B cell (primary cell): ENCODE measurements at regions of chr20 and their contacts with region 1.

Region 1: GRCh38 chr20:19706463-19706862 is 51.6 kb upstream of the RIN2 start:
- DNase-seq: peak; percentile 84
- ATAC-seq: peak; percentile 93
- H3K4me3 ChIP-seq: peak overlapping the region in 1 of 5 experiments; percentile 18
- H3K4me3 Mint-ChIP-seq: no peak overlapping the region
- H3K27ac ChIP-seq: peak overlapping the region; percentile 61 to 65
- H3K27ac Mint-ChIP-seq: no peak overlapping the region
- H3K4me1 ChIP-seq: peaks cover 49 to 53% of the 10 kb centered on the region in 2 donors
- H3K4me1 Mint-ChIP-seq: peaks cover 30% of the 10 kb centered on the region
- H3K27me3 ChIP-seq: no peaks in the 10 kb centered on the region
- H3K27me3 Mint-ChIP-seq: no peaks in the 10 kb centered on the region
- CTCF ChIP-seq: no peak

Region 2: GRCh38 chr20:19727251-19727847 is 20.9 kb after region 1 on chr20:
- CTCF ChIA-PET with region 1: no interaction called
- POLR2A ChIA-PET with region 1: no interaction called
- intact Hi-C with region 1: loop called (anchors 1 kb)
- DNase-seq: no peak
- ATAC-seq: no peak
- H3K4me3 ChIP-seq: no peak overlapping the region
- H3K4me3 Mint-ChIP-seq: no peak overlapping the region
- H3K27ac ChIP-seq: no peak overlapping the region
- H3K27ac Mint-ChIP-seq: no peak overlapping the region
- H3K4me1 ChIP-seq: peaks cover 20 to 24% of the 10 kb centered on the region in 2 donors
- H3K4me1 Mint-ChIP-seq: peaks cover 29% of the 10 kb centered on the region
- H3K27me3 ChIP-seq: no peaks in the 10 kb centered on the region
- H3K27me3 Mint-ChIP-seq: no peaks in the 10 kb centered on the region
- CTCF ChIP-seq: no peak

Region 3: DNA sequence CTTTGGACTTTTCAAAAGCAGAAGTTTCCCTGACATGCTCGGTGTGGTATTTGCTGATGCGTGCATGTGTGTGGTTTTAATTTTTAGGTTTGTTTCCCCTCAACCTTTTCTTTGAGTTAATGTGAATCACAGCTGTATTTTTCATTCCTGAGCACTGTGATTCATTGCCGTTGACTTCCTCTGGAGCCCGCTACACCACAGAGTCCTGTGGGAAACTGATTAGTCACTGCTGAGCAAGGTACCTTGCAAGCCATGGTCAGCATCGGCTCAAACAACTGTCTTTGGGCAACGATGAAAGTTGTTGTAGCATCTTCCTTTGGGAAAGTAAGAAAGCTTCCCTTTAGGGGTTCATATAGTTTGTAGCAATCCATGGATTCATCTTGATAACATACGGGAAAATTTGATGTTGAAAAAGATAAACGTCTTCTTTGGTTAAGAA is 109.1 kb after region 1 on chr20:
- CTCF ChIA-PET with region 1: interaction called, 4 read pairs
- POLR2A ChIA-PET with region 1: no interaction called
- intact Hi-C with region 1: loop called (anchors 1 kb)
- DNase-seq: peak; percentile 69
- ATAC-seq: peak; percentile 87
- H3K4me3 ChIP-seq: peak overlapping the region in 2 of 5 experiments; percentile 16 to 24
- H3K4me3 Mint-ChIP-seq: peak overlapping the region; percentile 65
- H3K27ac ChIP-seq: no peak overlapping the region
- H3K27ac Mint-ChIP-seq: peak overlapping the region; percentile 75
- H3K4me1 ChIP-seq: peaks cover 46 to 48% of the 10 kb centered on the region in 2 donors
- H3K4me1 Mint-ChIP-seq: peaks cover 67% of the 10 kb centered on the region
- H3K27me3 ChIP-seq: no peaks in the 10 kb centered on the region
- H3K27me3 Mint-ChIP-seq: no peaks in the 10 kb centered on the region
- CTCF ChIP-seq: no peak

Region 4: GRCh38 chr20:19889011-19889953 is 182.8 kb after region 1 on chr20:
- CTCF ChIA-PET with region 1: no interaction called
- POLR2A ChIA-PET with region 1: no interaction called
- intact Hi-C with region 1: no loop called
- DNase-seq: no peak
- ATAC-seq: no peak
- H3K4me3 ChIP-seq: no peak overlapping the region
- H3K4me3 Mint-ChIP-seq: no peak overlapping the region
- H3K27ac ChIP-seq: no peak overlapping the region
- H3K27ac Mint-ChIP-seq: no peak overlapping the region
- H3K4me1 ChIP-seq: peaks cover 2 to 5% of the 10 kb centered on the region in 2 donors
- H3K4me1 Mint-ChIP-seq: no peaks in the 10 kb centered on the region
- H3K27me3 ChIP-seq: peaks cover 0 to 26% (median 15%) of the 10 kb centered on the region in 4 experiments
- H3K27me3 Mint-ChIP-seq: peaks cover 39% of the 10 kb centered on the region
- CTCF ChIP-seq: no peak

Region 5: DNA sequence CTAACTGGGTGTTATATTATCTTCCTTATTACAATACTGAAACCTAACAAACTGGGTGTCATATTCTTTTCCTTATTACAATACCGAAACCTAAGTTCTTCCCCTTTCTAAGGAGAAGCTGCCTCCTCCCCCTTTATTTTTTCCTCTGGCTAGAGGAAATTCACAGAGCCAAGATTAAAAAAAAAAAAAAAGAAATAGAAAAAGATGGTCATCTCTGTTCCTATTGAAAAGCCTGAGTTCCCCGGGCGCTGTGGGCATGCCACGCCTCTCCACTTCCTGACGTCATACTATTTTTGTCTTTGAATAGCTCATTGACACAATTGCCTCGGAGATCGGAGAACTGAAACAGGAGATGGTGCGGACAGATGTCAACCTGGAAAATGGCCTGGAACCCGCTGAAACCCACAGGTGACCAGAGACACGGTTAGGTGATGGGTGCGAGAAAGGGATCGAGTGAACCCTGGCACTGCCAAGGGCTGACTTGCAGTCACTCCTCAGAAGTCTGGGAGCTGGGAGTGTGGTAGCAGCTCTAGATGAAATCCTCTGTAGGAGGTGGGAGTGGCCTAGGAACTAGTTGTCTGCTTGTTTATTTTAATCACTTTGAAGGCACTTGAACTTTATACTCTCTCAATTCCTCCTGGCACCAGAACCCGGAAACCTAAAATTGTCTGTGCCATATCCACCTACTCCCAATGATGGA is 228.5 kb after region 1 on chr20:
- CTCF ChIA-PET with region 1: no interaction called
- POLR2A ChIA-PET with region 1: no interaction called
- intact Hi-C with region 1: loop called (anchors 2 kb)
- DNase-seq: peak; percentile 81
- ATAC-seq: peak; percentile 64
- H3K4me3 ChIP-seq: peak overlapping the region in 4 of 5 experiments; percentile 14 to 57 (median 36)
- H3K4me3 Mint-ChIP-seq: peak overlapping the region; percentile 78
- H3K27ac ChIP-seq: peak overlapping the region; percentile 31 to 39
- H3K27ac Mint-ChIP-seq: peak overlapping the region; percentile 32
- H3K4me1 ChIP-seq: peaks cover 31 to 34% of the 10 kb centered on the region in 2 donors
- H3K4me1 Mint-ChIP-seq: peaks cover 46% of the 10 kb centered on the region
- H3K27me3 ChIP-seq: no peaks in the 10 kb centered on the region
- H3K27me3 Mint-ChIP-seq: no peaks in the 10 kb centered on the region
- CTCF ChIP-seq: no peak

Region 6: DNA sequence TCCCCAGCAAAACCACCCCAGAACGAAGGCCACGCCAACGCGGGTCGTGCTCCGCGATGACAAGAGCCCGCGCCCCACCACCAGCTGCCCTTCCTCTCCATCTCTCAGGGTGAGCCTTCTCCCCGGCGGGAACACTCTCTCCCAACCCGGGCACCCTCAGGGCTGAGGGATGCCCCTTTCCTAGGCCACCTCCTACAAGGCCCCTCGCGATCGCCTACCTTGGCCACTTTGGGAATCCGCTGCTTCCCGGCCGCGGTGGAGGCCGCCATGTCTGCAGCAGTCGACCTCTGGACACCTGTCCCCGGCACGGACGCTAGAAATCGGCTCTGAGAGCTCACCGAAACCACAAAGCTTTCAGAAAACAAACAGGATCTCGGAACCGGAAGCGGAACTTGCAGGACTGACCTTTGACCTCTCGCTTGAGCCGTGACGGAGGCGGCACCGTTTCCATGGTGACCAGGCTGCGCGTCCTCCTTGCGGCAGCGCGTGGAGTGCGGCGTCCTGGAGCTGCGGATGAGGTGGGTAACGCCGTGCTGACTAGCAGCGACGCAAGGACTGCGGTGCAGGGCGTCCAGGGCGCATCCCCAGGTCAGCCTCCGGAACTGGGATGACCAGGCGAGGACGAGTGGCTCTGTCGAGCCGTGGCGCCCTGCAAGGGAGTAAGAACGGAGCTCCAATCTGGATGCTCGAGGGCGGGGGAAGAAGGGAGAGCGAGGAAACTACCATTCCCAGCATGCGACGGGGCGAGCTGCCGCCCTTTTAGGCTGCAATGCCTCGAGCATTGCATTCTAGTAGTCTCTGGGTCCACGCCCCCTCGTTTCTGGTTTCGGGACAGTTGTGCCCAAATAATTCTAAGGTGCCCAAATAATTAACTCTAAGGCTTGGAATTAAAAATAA is 345.9 kb after region 1 on chr20 and contains the starts of genes CFAP61 and CRNKL1:
- CTCF ChIA-PET with region 1: no interaction called
- POLR2A ChIA-PET with region 1: no interaction called
- intact Hi-C with region 1: loop called (anchors 10 kb)
- DNase-seq: peak; percentile 99
- ATAC-seq: peak; percentile 93
- H3K4me3 ChIP-seq: peak within 1 kb of the TSS; percentile 85 to 98 (median 97)
- H3K4me3 Mint-ChIP-seq: peak within 1 kb of the TSS; percentile 99
- H3K27ac ChIP-seq: peak within 1 kb of the TSS; percentile 78 to 91
- H3K27ac Mint-ChIP-seq: peak within 1 kb of the TSS; percentile 97
- H3K4me1 ChIP-seq: peaks cover 7 to 14% of the 10 kb centered on the region in 2 donors
- H3K4me1 Mint-ChIP-seq: peaks cover 23% of the 10 kb centered on the region
- H3K27me3 ChIP-seq: peaks cover 0 to 9% (median 5%) of the 10 kb centered on the region in 4 experiments
- H3K27me3 Mint-ChIP-seq: peaks cover 7% of the 10 kb centered on the region
- CTCF ChIP-seq: no peak
- total RNA-seq, gene CFAP61: not detected in 2 replicates
- total RNA-seq, gene CRNKL1: 25.5 and 32.1 TPM in 2 replicates

Region 7: GRCh38 chr20:20360464-20360863 is 654.0 kb after region 1 on chr20:
- CTCF ChIA-PET with region 1: no interaction called
- POLR2A ChIA-PET with region 1: no interaction called
- intact Hi-C with region 1: no loop called
- DNase-seq: peak; percentile 60
- ATAC-seq: peak; percentile 60
- H3K4me3 ChIP-seq: no peak overlapping the region
- H3K4me3 Mint-ChIP-seq: peak overlapping the region; percentile 14
- H3K27ac ChIP-seq: no peak overlapping the region
- H3K27ac Mint-ChIP-seq: no peak overlapping the region
- H3K4me1 ChIP-seq: peaks cover 9 to 18% of the 10 kb centered on the region in 2 donors
- H3K4me1 Mint-ChIP-seq: peaks cover 30% of the 10 kb centered on the region
- H3K27me3 ChIP-seq: peaks cover 0 to 46% (median 23%) of the 10 kb centered on the region in 4 experiments
- H3K27me3 Mint-ChIP-seq: peaks cover 47% of the 10 kb centered on the region
- CTCF ChIP-seq: peak; percentile 74